Endothelial cell of umbilical vein (primary cell): ENCODE measurements at regions of chr19 and their contacts with region 1.

Region 1: GRCh38 chr19:34269968-34270621 is 15.7 kb downstream of the GARRE1 start:
- DNase-seq: peak; percentile 99
- H3K4me3 ChIP-seq: peak overlapping the region in 1 of 3 experiments; percentile 54
- H3K27ac ChIP-seq: peak overlapping the region; percentile 100
- H3K4me1 ChIP-seq: peaks cover 75% of the 10 kb centered on the region
- H3K27me3 ChIP-seq: no peaks in the 10 kb centered on the region
- CTCF ChIP-seq: no peak
- POLR2A ChIP-seq: no peak

Region 2: DNA sequence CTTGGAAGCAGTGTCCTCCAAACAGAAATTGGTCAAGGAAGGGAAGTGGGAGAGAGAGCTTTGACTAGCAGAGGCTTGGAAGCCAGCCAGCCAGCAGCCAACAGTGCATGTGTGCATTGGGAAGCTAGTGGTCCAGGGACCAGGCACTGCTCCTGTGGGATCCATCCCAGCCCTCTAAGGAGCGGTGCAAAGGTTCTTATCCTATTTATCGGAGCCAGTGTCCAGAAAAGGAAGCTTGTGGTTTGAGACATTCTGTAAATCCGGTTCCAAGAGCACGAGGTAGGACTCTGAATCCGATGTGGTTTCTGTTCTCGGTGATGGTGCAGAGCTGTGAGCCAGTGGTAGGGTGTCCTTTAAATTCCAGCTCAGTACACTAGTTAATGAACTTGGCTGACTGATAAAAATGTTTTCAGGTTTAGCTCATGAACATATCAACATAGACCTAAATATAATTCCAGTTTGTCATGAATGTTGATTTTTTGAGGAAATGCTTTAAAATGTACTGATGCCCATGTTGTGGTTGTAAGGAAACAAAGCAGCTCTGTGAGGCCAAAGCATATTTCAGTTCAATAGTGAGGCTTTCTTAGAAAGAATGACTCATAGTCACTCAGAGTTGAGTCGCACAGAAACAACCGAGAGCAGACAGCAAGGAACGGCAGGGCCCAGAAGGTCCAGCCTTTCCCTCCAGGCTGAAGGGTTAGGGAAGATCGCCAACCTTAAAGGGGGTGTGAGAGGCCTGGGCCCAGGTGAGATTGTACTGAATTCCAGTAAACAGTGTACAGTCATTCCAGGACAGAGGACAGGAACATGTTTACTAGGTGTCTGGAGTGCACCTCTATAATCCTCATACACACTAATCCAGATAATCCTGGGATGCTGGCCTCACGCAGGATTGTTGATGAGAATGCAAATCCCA is 37.3 kb before region 1 on chr19:
- CTCF ChIA-PET with region 1: interaction called, 4 read pairs
- POLR2A ChIA-PET with region 1: no interaction called
- dilution Hi-C with region 1: no loop called
- intact Hi-C with region 1: loop called (anchors 2 kb)
- DNase-seq: peak; percentile 87
- H3K4me3 ChIP-seq: no peak overlapping the region
- H3K27ac ChIP-seq: peak overlapping the region; percentile 45
- H3K4me1 ChIP-seq: peaks cover 29% of the 10 kb centered on the region
- H3K27me3 ChIP-seq: no peaks in the 10 kb centered on the region
- CTCF ChIP-seq: no peak
- POLR2A ChIP-seq: no peak

Region 3: GRCh38 chr19:34253699-34254551 is 16.2 kb before region 1 on chr19:
- CTCF ChIA-PET with region 1: interaction called, 4 read pairs
- POLR2A ChIA-PET with region 1: no interaction called
- dilution Hi-C with region 1: no loop called
- intact Hi-C with region 1: loop called (anchors 1 kb)
- DNase-seq: peak; percentile 60
- H3K4me3 ChIP-seq: peak overlapping the region; percentile 70 to 87 (median 84)
- H3K27ac ChIP-seq: peak overlapping the region; percentile 86
- H3K4me1 ChIP-seq: peaks cover 10% of the 10 kb centered on the region
- H3K27me3 ChIP-seq: no peaks in the 10 kb centered on the region
- CTCF ChIP-seq: no peak
- POLR2A ChIP-seq: peak; percentile 69

Region 4: GRCh38 chr19:34313188-34313587 is 43.1 kb after region 1 on chr19:
- CTCF ChIA-PET with region 1: interaction called, 4 read pairs
- POLR2A ChIA-PET with region 1: interaction called, 3 read pairs
- dilution Hi-C with region 1: no loop called
- intact Hi-C with region 1: loop called (anchors 1 kb)
- DNase-seq: peak; percentile 66
- H3K4me3 ChIP-seq: no peak overlapping the region
- H3K27ac ChIP-seq: peak overlapping the region; percentile 71
- H3K4me1 ChIP-seq: peaks cover 35% of the 10 kb centered on the region
- H3K27me3 ChIP-seq: no peaks in the 10 kb centered on the region
- CTCF ChIP-seq: no peak
- POLR2A ChIP-seq: peak; percentile 39

Region 5: GRCh38 chr19:34319785-34320184 is 49.7 kb after region 1 on chr19:
- CTCF ChIA-PET with region 1: interaction called, 7 read pairs
- POLR2A ChIA-PET with region 1: interaction called, 5 read pairs
- dilution Hi-C with region 1: loop called (anchors 10 kb)
- intact Hi-C with region 1: loop called (anchors 1 kb)
- DNase-seq: peak; percentile 94
- H3K4me3 ChIP-seq: no peak overlapping the region
- H3K27ac ChIP-seq: peak overlapping the region; percentile 98
- H3K4me1 ChIP-seq: peaks cover 49% of the 10 kb centered on the region
- H3K27me3 ChIP-seq: no peaks in the 10 kb centered on the region
- CTCF ChIP-seq: no peak
- POLR2A ChIP-seq: no peak

Region 6: GRCh38 chr19:34336781-34337271 is 66.7 kb after region 1 on chr19:
- CTCF ChIA-PET with region 1: interaction called, 9 read pairs
- POLR2A ChIA-PET with region 1: interaction called, 6 read pairs
- dilution Hi-C with region 1: no loop called
- intact Hi-C with region 1: loop called (anchors 1 kb)
- DNase-seq: peak; percentile 68
- H3K4me3 ChIP-seq: no peak overlapping the region
- H3K27ac ChIP-seq: peak overlapping the region; percentile 4
- H3K4me1 ChIP-seq: peaks cover 28% of the 10 kb centered on the region
- H3K27me3 ChIP-seq: no peaks in the 10 kb centered on the region
- CTCF ChIP-seq: peak; percentile 40 to 43
- POLR2A ChIP-seq: no peak